T-cell (primary cell): ENCODE measurements at regions of chr5 and their contacts with region 1.

Region 1: DNA sequence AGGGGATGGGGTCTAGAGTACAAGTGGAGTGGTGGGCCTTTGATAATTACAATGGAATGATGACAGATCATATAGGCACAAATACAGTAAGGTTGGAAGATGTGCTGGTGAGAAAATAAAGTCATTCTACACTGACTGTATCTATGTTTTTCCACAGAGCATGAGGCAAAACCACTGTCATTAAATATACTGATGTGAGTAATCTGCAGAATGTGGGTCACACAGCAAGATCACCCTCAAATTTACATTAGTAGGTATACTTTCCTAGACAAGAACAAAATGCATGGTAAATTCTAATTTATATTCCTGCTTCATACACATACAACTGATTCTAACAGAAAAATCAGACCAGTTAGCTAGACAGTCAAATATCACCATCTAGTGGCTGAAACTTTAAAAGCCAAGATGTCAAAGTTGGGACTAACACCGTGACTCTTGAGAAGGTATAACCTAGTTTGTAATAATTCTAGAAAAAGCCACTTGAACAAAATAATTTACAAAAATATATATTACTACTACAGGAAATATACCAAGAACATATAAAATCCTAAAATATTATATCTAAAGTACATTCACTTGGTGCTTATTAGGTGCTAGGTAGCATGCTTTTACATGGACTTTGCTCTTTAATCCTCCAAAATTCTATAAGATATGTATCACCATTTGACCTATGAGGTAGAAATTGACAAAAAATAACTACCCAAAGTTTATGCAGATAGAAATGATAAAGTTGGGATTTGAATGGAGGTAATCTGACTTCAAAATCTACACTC is 19.5 kb downstream of the TTC33 start:
- DNase-seq: peak in 3 of 35 experiments; percentile 8 to 79 (median 35)
- ATAC-seq: peak in 2 of 4 experiments; percentile 59 to 70
- H3K4me3 ChIP-seq: no peak overlapping the region
- H3K4me3 Mint-ChIP-seq: no peak overlapping the region
- H3K27ac ChIP-seq: no peak overlapping the region
- H3K27ac Mint-ChIP-seq: no peak overlapping the region
- H3K4me1 ChIP-seq: no peaks in the 10 kb centered on the region
- H3K4me1 Mint-ChIP-seq: peaks cover 22 to 23% (median 23%) of the 10 kb centered on the region in 3 donors
- H3K27me3 ChIP-seq: no peaks in the 10 kb centered on the region
- H3K27me3 Mint-ChIP-seq: no peaks in the 10 kb centered on the region

Region 2: DNA sequence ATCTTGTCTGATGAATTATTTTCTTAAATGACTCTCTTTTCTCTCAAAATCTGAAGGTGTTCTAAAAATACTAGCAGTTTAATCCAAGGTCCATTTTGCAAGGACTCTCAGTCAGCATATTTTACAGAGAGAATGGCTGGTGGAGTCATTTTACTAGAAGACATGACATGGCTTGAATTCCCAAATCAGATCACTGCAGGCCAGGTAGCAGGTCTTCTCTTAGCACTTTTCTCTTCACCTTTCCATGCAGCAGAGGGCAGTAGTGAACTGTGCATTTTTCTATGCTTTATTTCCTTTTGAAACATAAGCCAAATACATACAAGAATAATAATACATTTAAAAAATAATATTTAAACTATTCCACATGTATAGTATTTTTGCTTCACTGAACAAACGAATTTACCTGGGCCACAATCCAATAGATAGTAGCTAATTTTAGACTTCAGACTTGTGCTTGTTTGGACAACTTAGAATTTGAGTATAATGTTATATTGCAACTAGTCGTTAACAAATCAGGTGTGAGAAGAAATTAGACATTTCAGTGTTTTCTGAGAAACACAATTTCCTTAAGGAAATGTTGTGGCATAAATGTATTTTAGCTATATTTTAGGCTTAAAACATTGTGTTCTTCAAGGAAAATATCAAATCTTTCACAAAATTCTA is 1022.1 kb before region 1 on chr5:
- CTCF ChIA-PET with region 1: interaction called, 12 to 21 read pairs
- POLR2A ChIA-PET with region 1: no interaction called
- DNase-seq: peak in 25 of 35 experiments; percentile 1 to 71 (median 17)
- ATAC-seq: peak in 1 of 4 experiments; percentile 48
- H3K4me3 ChIP-seq: no peak overlapping the region
- H3K4me3 Mint-ChIP-seq: no peak overlapping the region
- H3K27ac ChIP-seq: no peak overlapping the region
- H3K27ac Mint-ChIP-seq: no peak overlapping the region
- H3K4me1 ChIP-seq: no peaks in the 10 kb centered on the region
- H3K4me1 Mint-ChIP-seq: no peaks in the 10 kb centered on the region
- H3K27me3 ChIP-seq: no peaks in the 10 kb centered on the region
- H3K27me3 Mint-ChIP-seq: peaks cover 0 to 3% of the 10 kb centered on the region in 2 donors

Region 3: GRCh38 chr5:39948867-39949468 is 787.3 kb before region 1 on chr5:
- CTCF ChIA-PET with region 1: interaction called, 13 to 14 read pairs
- POLR2A ChIA-PET with region 1: interaction called in 1 of 2 experiments, 3 read pairs
- DNase-seq: peak in 32 of 35 experiments; percentile 11 to 85 (median 47)
- ATAC-seq: peak; percentile 76 to 87 (median 80)
- H3K4me3 ChIP-seq: no peak overlapping the region
- H3K4me3 Mint-ChIP-seq: no peak overlapping the region
- H3K27ac ChIP-seq: no peak overlapping the region
- H3K27ac Mint-ChIP-seq: no peak overlapping the region
- H3K4me1 ChIP-seq: no peaks in the 10 kb centered on the region
- H3K4me1 Mint-ChIP-seq: peaks cover 0 to 3% (median 2%) of the 10 kb centered on the region in 3 donors
- H3K27me3 ChIP-seq: no peaks in the 10 kb centered on the region
- H3K27me3 Mint-ChIP-seq: no peaks in the 10 kb centered on the region

Region 4: GRCh38 chr5:40477856-40478546 is 258.3 kb before region 1 on chr5:
- CTCF ChIA-PET with region 1: no interaction called
- POLR2A ChIA-PET with region 1: no interaction called
- DNase-seq: no peak
- ATAC-seq: no peak
- H3K4me3 ChIP-seq: no peak overlapping the region
- H3K4me3 Mint-ChIP-seq: no peak overlapping the region
- H3K27ac ChIP-seq: no peak overlapping the region
- H3K27ac Mint-ChIP-seq: no peak overlapping the region
- H3K4me1 ChIP-seq: no peaks in the 10 kb centered on the region
- H3K4me1 Mint-ChIP-seq: peaks cover 0 to 13% (median 7%) of the 10 kb centered on the region in 3 donors
- H3K27me3 ChIP-seq: peaks cover 0 to 3% of the 10 kb centered on the region in 2 experiments
- H3K27me3 Mint-ChIP-seq: no peaks in the 10 kb centered on the region